ENCODE measurements at regions of chr1 and their contacts with region 1.

Region 1: GRCh38 chr1:109075531-109076490 is at the start of gene TAF13:
- DNase-seq: peak; percentile 87 to 93
- ATAC-seq: peak; percentile 98 to 99 (median 99)
- H3K4me3 ChIP-seq: peak within 1 kb of the TSS; percentile 88
- H3K4me3 Mint-ChIP-seq: peak within 1 kb of the TSS; percentile 98
- H3K27ac ChIP-seq: peak within 1 kb of the TSS; percentile 90
- H3K27ac Mint-ChIP-seq: peak within 1 kb of the TSS; percentile 99
- H3K4me1 ChIP-seq: peaks cover 8% of the 10 kb centered on the region
- H3K4me1 Mint-ChIP-seq: peaks cover 21% of the 10 kb centered on the region in 2 donors
- H3K27me3 ChIP-seq: no peaks in the 10 kb centered on the region
- H3K27me3 Mint-ChIP-seq: peaks cover 3 to 6% of the 10 kb centered on the region in 2 donors
- CTCF ChIP-seq: no peak
- total RNA-seq, gene TAF13: 44.4 to 54.5 (median 47.2) TPM

Region 2: GRCh38 chr1:109011335-109011734 is 64.5 kb before region 1 on chr1:
- intact Hi-C with region 1: no loop called
- DNase-seq: no peak
- ATAC-seq: no peak
- H3K4me3 ChIP-seq: no peak overlapping the region
- H3K4me3 Mint-ChIP-seq: no peak overlapping the region
- H3K27ac ChIP-seq: no peak overlapping the region
- H3K27ac Mint-ChIP-seq: no peak overlapping the region
- H3K4me1 ChIP-seq: no peaks in the 10 kb centered on the region
- H3K4me1 Mint-ChIP-seq: no peaks in the 10 kb centered on the region
- H3K27me3 ChIP-seq: no peaks in the 10 kb centered on the region
- H3K27me3 Mint-ChIP-seq: no peaks in the 10 kb centered on the region
- CTCF ChIP-seq: no peak

Region 3: DNA sequence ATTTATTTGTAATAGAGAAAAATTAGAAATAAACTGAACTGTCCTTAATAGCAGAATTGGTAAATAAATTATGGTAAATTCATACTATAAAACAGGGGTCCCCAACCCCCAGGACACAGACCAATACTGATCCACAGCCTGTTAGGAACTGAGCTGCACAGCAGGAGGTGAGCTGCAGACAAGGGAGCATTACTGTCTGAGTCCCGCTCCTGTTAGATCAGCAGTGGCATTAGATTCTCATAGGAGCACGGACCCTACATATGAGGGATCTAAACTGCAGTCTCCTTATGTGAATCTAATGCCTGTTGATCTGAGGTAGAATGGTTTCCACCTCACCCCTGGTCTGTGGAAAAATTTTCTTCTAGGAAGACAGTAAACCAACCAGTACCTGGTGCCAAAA is 41.4 kb before region 1 on chr1:
- intact Hi-C with region 1: no loop called
- DNase-seq: no peak
- ATAC-seq: no peak
- H3K4me3 ChIP-seq: no peak overlapping the region
- H3K4me3 Mint-ChIP-seq: no peak overlapping the region
- H3K27ac ChIP-seq: no peak overlapping the region
- H3K27ac Mint-ChIP-seq: no peak overlapping the region
- H3K4me1 ChIP-seq: no peaks in the 10 kb centered on the region
- H3K4me1 Mint-ChIP-seq: no peaks in the 10 kb centered on the region
- H3K27me3 ChIP-seq: no peaks in the 10 kb centered on the region
- H3K27me3 Mint-ChIP-seq: no peaks in the 10 kb centered on the region
- CTCF ChIP-seq: no peak

Region 4: GRCh38 chr1:109090196-109091077 is 14.6 kb after region 1 on chr1 and contains the start of gene TMEM167B:
- intact Hi-C with region 1: loop called (anchors 1 kb)
- DNase-seq: peak; percentile 81 to 93
- ATAC-seq: peak; percentile 93 to 98 (median 94)
- H3K4me3 ChIP-seq: peak within 1 kb of the TSS; percentile 91
- H3K4me3 Mint-ChIP-seq: peak within 1 kb of the TSS; percentile 93
- H3K27ac ChIP-seq: peak within 1 kb of the TSS; percentile 97
- H3K27ac Mint-ChIP-seq: peak within 1 kb of the TSS; percentile 94 to 96
- H3K4me1 ChIP-seq: peaks cover 20% of the 10 kb centered on the region
- H3K4me1 Mint-ChIP-seq: peaks cover 28% of the 10 kb centered on the region in 2 donors
- H3K27me3 ChIP-seq: no peaks in the 10 kb centered on the region
- H3K27me3 Mint-ChIP-seq: no peaks in the 10 kb centered on the region
- CTCF ChIP-seq: no peak
- total RNA-seq, gene TMEM167B: 61.2 to 73.0 (median 71.8) TPM

Region 5: DNA sequence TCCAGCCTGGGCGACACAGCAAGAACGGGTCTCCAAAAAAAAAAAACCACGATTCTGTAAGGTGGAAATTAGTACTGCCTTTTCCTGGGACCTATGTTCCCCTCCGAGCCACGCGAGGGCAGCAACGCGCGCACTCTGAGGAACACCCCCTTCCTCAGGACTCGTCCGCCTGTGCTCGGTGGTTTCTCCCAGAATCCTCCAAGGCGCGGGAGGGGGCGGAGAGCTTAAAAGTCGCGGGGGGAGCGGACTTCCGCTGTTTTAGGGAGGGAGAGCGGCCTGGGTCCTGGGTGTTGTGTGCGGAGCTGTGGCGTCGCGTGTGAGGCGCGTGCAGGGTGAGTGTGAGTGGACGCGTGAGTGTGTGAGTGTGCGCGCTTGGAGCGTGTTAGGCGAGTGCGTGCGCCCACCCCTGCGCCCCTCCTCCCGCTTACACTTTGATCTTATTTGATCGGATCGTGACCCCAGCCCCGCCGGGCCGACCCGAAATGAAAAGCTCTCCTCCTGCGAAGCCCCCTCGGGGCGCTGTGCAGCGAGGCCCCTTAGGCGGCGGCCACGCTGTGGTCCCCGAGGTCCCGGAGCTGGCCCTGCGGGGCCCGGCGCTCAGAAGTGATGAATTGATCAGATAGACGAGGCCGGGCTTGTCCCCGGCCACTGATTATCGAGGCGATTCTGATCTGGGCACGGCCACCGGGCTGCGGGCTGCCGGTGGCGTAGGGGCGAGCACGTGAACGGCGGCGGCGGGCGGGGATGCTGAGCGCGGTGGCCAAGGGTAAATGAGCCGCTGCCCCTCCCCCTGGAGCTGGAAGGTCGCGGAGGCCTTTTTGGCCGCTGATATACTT is 24.3 kb after region 1 on chr1:
- intact Hi-C with region 1: loop called (anchors 1 kb)
- DNase-seq: peak; percentile 91 to 98
- ATAC-seq: peak; percentile 93 to 98 (median 94)
- H3K4me3 ChIP-seq: peak overlapping the region; percentile 95
- H3K4me3 Mint-ChIP-seq: peak overlapping the region; percentile 98
- H3K27ac ChIP-seq: peak overlapping the region; percentile 94
- H3K27ac Mint-ChIP-seq: peak overlapping the region; percentile 93 to 97
- H3K4me1 ChIP-seq: peaks cover 19% of the 10 kb centered on the region
- H3K4me1 Mint-ChIP-seq: peaks cover 13 to 20% of the 10 kb centered on the region in 2 donors
- H3K27me3 ChIP-seq: no peaks in the 10 kb centered on the region
- H3K27me3 Mint-ChIP-seq: no peaks in the 10 kb centered on the region
- CTCF ChIP-seq: peak; percentile 72

Measured in natural killer cell (primary cell).